HAP-1 (cell line): ENCODE measurements at regions of chr10 and their contacts with region 1.

Region 1: DNA sequence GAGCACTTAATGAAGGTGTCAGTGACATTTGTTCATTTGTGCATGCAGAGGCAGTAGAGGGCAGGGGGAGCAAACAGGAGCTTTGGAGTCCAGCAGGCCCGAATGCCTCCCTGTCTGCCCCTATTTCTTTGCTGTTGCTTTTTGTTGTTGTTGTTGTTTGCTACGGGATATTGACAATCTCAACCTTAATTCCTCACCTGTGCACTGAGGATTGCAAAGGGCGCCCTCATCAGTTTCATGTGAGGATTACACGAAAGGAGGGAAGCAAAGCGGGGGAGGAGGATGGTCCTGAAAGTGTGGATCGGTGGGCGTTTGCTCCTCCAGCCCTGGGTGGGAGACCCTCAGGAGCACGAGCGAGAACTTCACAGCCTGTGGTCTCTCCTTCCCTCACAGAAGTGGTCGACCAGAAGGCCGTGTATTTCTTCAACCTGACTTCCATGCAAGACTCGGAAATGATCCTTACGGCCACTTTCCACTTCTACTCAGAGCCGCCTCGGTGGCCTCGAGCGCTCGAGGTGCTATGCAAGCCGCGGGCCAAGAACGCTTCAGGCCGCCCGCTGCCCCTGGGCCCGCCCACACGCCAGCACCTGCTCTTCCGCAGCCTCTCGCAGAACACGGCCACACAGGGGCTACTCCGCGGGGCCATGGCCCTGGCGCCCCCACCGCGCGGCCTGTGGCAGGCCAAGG is 9.5 kb downstream of the GDF10 start:
- DNase-seq: peak in 1 of 2 experiments; percentile 14
- H3K4me3 ChIP-seq: no peak overlapping the region
- H3K4me1 ChIP-seq: no peaks in the 10 kb centered on the region
- H3K27me3 ChIP-seq: no peaks in the 10 kb centered on the region

Region 2: DNA sequence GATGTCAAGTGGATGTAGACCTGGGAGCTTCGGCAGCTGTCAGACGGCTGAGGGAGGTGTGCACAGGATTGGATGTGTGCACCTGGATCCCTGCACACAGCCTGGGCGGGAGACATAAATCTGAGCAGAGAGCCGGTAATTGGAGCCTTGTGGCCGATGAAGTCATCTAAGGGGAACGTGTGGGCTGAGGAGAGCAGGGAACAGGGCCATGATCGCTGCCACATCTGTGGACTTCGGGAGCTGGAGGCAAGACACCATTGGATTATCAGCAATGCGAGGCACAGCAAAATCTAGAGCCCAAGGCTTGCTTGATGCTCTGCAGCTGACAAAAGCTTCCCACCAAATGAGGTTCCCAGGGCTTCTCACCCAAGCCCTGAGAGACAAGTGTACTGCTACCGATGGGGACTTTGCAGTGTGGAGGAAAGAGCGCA is 250.6 kb before region 1 on chr10:
- in situ Hi-C with region 1: loop called (anchors 10 kb)
- DNase-seq: no peak
- H3K4me3 ChIP-seq: no peak overlapping the region
- H3K4me1 ChIP-seq: no peaks in the 10 kb centered on the region
- H3K27me3 ChIP-seq: no peaks in the 10 kb centered on the region

Region 3: GRCh38 chr10:47133871-47134570 is 175.5 kb before region 1 on chr10:
- in situ Hi-C with region 1: no loop called
- DNase-seq: no peak
- H3K4me3 ChIP-seq: no peak overlapping the region
- H3K4me1 ChIP-seq: no peaks in the 10 kb centered on the region
- H3K27me3 ChIP-seq: no peaks in the 10 kb centered on the region